Adrenal gland (tissue), 19 donors: ENCODE measurements at regions of chr4 and their contacts with region 1.

Region 1: DNA sequence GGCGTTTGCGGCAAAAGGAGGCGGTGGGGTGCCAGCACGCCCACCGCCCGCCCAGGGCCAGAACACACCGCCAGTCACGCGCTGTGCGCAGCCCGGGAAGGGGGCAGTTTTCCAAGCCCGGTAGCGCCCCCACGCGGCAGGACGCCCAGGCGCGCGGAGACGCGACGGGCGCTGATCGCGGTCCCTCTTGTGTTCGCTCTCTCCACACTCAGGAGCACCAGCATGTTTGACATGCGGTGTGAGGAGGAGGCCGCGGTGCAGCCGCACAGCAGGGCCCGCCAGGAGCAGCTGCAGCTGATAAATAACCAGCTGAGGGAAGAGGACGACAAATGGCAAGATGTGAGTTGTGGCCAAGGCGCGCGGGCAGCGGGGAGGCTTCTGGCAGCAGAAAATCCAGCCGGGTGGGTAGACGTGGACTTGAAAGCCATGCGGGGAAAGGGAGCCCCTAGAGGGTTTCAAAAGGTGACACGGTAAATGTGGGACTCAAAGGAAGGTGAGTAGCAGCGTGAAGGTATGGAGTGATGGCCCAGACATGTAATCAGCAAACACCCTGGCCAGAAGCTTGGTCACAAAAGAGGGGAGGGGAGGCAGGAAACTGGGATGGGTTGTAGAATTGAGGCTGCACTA is 104.1 kb downstream of the PHOX2B start:
- DNase-seq: peak; percentile 52 to 90 (median 78)
- H3K4me3 ChIP-seq: peak overlapping the region in 1 of 4 donors; percentile 14
- H3K27ac ChIP-seq: no peak overlapping the region
- H3K4me1 ChIP-seq: peaks cover 3 to 18% of the 10 kb centered on the region in 2 donors
- H3K27me3 ChIP-seq: no peaks in the 10 kb centered on the region
- CTCF ChIP-seq: peak; percentile 77 to 90 (median 86)
- POLR2A ChIP-seq: no peak

Region 2: DNA sequence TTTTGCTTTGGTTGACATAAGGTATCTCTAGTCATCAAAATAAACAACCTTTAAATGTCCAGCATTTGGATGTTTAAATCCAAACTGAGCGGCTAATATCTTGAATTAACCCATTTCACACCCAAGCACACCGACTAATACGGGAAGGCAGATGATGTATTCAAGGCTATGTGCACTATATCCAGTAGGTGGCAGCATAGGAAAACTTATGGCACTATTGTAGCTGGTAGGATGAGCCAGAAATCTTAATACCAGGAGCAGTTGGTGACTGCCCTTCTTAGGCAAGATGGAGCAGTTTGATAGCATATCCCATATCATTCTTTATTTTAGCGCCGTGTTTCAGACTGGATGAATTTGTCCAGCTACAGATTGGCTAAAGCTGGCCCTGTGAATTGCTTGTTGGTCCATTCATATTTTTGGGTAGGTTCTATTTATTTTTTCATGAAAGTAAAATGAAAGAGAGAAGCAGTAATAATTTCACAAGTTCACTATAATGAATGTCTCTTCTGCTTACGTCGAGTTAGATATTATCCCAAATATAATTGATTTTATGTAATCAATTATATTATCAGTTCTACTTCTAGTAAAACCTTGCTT is 363.3 kb before region 1 on chr4:
- intact Hi-C with region 1: loop called in 1 of 2 experiments (anchors 5 kb)
- DNase-seq: peak; percentile 34 to 71 (median 61)
- H3K4me3 ChIP-seq: no peak overlapping the region
- H3K27ac ChIP-seq: no peak overlapping the region
- H3K4me1 ChIP-seq: no peaks in the 10 kb centered on the region
- H3K27me3 ChIP-seq: no peaks in the 10 kb centered on the region
- CTCF ChIP-seq: peak; percentile 75 to 98 (median 94)
- POLR2A ChIP-seq: no peak

Region 3: DNA sequence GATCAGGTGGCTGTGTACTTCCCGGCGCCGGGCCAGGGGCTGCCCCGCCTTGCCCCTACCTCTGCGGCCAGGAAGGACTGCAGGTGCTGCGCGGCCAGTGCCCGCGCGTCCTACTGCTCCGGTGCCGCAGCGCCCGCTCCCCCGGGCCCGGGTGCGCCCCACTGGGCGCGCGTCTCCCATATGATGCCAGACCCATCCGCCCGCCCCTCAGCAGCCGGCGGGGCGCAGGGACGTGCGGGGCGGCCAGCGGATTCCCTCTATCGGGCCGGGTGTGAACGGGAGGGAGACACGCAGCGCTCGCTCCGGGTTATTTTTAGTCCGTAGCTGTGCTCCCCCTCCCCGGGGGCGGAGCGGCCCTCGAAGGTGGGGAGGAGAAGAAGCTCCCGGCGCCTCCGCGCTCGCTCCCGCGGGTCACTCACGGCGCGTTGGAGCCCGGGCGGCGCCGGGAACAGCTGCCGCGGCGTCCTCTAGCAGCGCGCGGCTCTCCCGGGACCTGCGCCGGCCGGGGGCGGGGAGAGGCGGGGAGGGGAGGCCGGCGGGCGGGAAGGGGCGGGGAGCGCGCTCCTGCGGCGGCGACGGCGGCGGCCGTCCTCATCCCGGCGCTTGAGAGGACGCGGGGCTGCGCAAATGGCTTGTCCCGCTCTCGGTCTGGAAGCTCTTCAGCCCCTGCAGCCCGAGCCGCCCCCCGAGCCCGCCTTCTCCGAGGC is 284.0 kb before region 1 on chr4:
- intact Hi-C with region 1: loop called in 1 of 2 experiments (anchors 10 kb)
- DNase-seq: peak; percentile 70 to 81 (median 77)
- H3K4me3 ChIP-seq: peak overlapping the region; percentile 56 to 99 (median 85)
- H3K27ac ChIP-seq: peak overlapping the region in 4 of 5 donors; percentile 63 to 91 (median 80)
- H3K4me1 ChIP-seq: peaks cover 29 to 34% of the 10 kb centered on the region in 2 donors
- H3K27me3 ChIP-seq: no peaks in the 10 kb centered on the region
- CTCF ChIP-seq: peak in 1 of 6 experiments; percentile 11
- POLR2A ChIP-seq: peak in 1 of 2 donors; percentile 71

Region 4: DNA sequence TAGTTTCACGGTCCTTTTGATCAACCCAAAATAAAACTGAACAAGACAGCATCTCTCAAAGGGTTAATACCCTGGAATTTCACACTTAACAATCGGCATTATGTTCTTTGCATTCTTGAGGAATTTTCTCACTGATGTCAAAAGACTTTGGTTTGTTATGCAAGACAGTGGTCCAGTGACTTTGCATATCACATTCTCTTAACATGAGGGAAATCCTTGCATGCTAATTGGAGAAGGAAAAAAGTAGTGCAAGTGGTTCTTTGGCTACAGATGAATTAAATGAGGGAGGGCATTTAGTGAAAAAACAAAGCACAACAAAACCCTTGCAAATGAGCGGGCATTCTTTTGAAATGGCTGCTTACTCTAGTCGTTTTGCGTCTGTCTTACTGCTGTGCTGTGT is 211.5 kb before region 1 on chr4:
- intact Hi-C with region 1: loop called in 1 of 2 experiments (anchors 10 kb)
- DNase-seq: no peak
- H3K4me3 ChIP-seq: no peak overlapping the region
- H3K27ac ChIP-seq: no peak overlapping the region
- H3K4me1 ChIP-seq: peaks cover 15 to 48% of the 10 kb centered on the region in 2 donors
- H3K27me3 ChIP-seq: no peaks in the 10 kb centered on the region
- CTCF ChIP-seq: no peak
- POLR2A ChIP-seq: no peak